ENCODE measurements at regions of chr1 and their contacts with region 1.

Region 1: DNA sequence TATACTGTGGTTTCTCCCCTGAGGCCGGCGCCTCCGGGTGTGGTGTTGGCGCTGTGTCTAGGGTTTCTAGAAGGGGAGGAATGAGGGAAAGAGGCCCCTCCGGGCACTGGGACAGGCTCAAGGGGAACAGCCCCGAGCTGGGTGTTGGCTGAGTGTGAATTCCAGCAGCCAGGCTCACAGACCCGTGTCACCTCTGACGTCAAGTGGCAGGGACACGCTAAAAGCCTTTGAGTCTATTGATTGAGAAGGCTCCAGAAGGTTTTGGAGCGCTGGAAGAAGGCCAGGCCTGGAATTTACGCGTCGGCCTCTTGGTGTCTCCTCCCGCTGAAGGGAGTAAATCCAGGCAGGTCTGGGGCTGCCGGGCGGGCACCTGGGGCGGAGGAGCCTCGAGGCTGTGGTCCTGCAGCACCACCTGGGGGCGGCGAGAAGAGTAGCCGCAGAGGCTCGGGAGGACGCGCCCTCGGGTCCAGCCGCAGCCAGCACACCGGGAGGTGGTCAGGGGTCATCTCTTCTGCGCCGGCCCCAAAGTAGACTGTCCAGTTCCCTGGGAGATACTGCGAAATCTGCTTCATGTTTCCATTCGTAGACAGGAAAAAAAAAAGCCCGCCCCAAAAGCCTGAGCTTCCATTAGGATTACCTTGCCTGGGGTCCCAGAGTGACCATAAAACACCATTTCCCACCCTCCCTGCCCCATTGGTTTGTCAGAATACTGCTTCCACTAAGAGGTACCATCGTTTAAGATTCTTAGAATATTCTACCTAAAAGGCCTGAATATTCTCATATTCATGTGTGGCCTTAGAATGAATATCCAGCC is 61.7 kb downstream of the TLR5 start:
- DNase-seq: peak; percentile 88
- ATAC-seq: peak; percentile 95

Region 2: GRCh38 chr1:222736972-222737371 is 344.4 kb before region 1 on chr1 and contains the start of gene FAM177B:
- intact Hi-C with region 1: loop called (anchors 1 kb)
- DNase-seq: no peak
- ATAC-seq: no peak
- total RNA-seq, gene FAM177B: not detected

Region 3: GRCh38 chr1:222792744-222793143 is 288.6 kb before region 1 on chr1:
- intact Hi-C with region 1: loop called (anchors 1 kb)
- DNase-seq: no peak
- ATAC-seq: no peak

Region 4: DNA sequence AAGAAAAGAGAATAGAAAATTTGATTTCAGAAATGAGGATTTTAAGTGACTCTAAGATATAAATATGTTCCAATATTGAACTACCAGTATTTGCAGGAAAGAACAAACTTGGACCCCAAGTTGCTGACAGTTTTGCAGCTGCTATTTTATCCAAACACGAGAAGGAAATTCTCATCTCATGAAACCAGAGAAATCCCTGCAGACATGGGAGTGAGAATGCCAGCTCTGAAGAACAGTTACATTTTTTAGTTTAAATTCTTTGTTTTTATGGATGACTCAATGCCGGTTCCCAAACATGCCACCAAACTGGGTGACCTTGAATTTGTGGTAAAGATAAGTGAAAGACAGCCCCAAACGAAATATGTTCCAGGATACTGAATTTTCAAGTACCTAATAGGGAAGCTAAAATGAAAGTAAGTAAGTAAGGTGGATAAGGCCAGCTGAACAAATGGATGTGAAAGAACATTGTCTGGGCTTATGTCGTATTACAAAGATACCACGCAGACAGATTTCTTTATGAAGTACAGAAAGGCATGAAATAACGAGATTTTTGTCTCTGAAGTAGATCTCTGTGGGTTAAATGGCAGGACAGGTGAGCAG is 41.7 kb after region 1 on chr1:
- intact Hi-C with region 1: loop called (anchors 2 kb)
- DNase-seq: no peak
- ATAC-seq: no peak

Measured in Right ventricle myocardium inferior (tissue), 1 donor.